Activated CD4-positive, alpha-beta T cell treated with anti-CD3 and anti-CD28 coated beads for 36 hours (primary cell): ENCODE measurements at regions of chrX and their contacts with region 1.

Region 1: GRCh38 chrX:136626237-136626636 is 21.7 kb upstream of the CD40LG start:
- DNase-seq: no peak
- ATAC-seq: peak; percentile 20
- H3K4me3 Mint-ChIP-seq: no peak overlapping the region
- H3K27ac Mint-ChIP-seq: peak overlapping the region; percentile 93
- H3K4me1 Mint-ChIP-seq: peaks cover 92% of the 10 kb centered on the region
- H3K27me3 Mint-ChIP-seq: no peaks in the 10 kb centered on the region

Region 2: DNA sequence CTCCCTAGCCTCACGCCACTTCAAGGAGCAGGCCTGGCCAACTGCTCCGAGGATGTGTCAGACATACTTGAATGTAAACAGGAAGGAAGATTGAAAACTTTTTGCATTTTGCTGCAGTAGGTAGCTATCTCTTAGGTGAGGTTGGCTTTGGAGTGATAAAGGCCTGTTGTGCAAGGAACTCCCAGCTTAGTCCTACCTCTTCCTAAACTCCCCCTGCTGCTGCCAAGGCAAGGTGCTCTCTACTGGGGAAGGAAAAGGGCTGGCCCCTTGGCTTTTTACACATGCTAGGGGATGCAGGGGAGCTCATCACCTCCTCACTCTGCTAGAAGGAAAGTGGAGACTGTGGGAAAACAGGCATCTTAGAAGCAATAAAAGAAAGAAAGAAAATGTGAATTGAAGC is 149.2 kb before region 1 on chrX:
- CTCF ChIA-PET with region 1: no interaction called
- POLR2A ChIA-PET with region 1: no interaction called
- intact Hi-C with region 1: no loop called
- DNase-seq: peak; percentile 17
- ATAC-seq: peak; percentile 47
- H3K4me3 Mint-ChIP-seq: no peak overlapping the region
- H3K27ac Mint-ChIP-seq: no peak overlapping the region
- H3K4me1 Mint-ChIP-seq: no peaks in the 10 kb centered on the region
- H3K27me3 Mint-ChIP-seq: no peaks in the 10 kb centered on the region

Region 3: GRCh38 chrX:136598631-136599030 is 27.6 kb before region 1 on chrX:
- CTCF ChIA-PET with region 1: no interaction called
- POLR2A ChIA-PET with region 1: no interaction called
- intact Hi-C with region 1: loop called (anchors 2 kb)
- DNase-seq: peak; percentile 58
- ATAC-seq: peak; percentile 86
- H3K4me3 Mint-ChIP-seq: peak overlapping the region; percentile 35
- H3K27ac Mint-ChIP-seq: peak overlapping the region; percentile 88
- H3K4me1 Mint-ChIP-seq: peaks cover 52% of the 10 kb centered on the region
- H3K27me3 Mint-ChIP-seq: no peaks in the 10 kb centered on the region

Region 4: GRCh38 chrX:136646602-136647239 is 20.5 kb after region 1 on chrX:
- CTCF ChIA-PET with region 1: interaction called, 7 read pairs
- POLR2A ChIA-PET with region 1: interaction called, 4 read pairs
- intact Hi-C with region 1: loop called (anchors 1 kb)
- DNase-seq: peak; percentile 84
- ATAC-seq: peak; percentile 60
- H3K4me3 Mint-ChIP-seq: peak overlapping the region; percentile 96
- H3K27ac Mint-ChIP-seq: peak overlapping the region; percentile 100
- H3K4me1 Mint-ChIP-seq: peaks cover 57% of the 10 kb centered on the region
- H3K27me3 Mint-ChIP-seq: no peaks in the 10 kb centered on the region

Region 5: GRCh38 chrX:136652822-136653723 is 26.8 kb after region 1 on chrX:
- CTCF ChIA-PET with region 1: interaction called, 6 read pairs
- POLR2A ChIA-PET with region 1: interaction called, 20 read pairs
- intact Hi-C with region 1: no loop called
- DNase-seq: peak; percentile 61
- ATAC-seq: peak; percentile 56
- H3K4me3 Mint-ChIP-seq: peak overlapping the region; percentile 96
- H3K27ac Mint-ChIP-seq: peak overlapping the region; percentile 100
- H3K4me1 Mint-ChIP-seq: peaks cover 43% of the 10 kb centered on the region
- H3K27me3 Mint-ChIP-seq: no peaks in the 10 kb centered on the region

Region 6: DNA sequence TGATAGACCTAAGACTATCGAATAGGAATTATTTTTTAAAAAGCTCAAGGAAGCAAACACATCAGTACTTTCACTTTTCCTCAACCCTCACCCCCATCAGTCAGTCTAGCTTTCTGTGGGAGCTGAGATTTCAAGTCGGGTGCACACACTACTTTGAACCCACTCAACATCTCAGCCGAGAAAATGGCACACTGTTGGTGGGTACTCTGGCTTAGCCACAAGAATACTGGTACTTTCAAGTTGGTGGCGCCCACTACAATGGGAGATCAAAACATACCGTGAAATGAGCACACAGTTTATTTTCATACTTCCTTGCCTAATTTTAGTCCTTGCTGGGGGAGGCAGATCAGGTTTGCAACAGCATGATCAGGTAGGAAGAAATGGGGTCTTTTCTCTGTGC is 31.9 kb after region 1 on chrX:
- CTCF ChIA-PET with region 1: interaction called, 6 read pairs
- POLR2A ChIA-PET with region 1: interaction called, 20 read pairs
- intact Hi-C with region 1: no loop called
- DNase-seq: peak; percentile 48
- ATAC-seq: peak; percentile 6
- H3K4me3 Mint-ChIP-seq: peak overlapping the region; percentile 96
- H3K27ac Mint-ChIP-seq: peak overlapping the region; percentile 100
- H3K4me1 Mint-ChIP-seq: peaks cover 85% of the 10 kb centered on the region
- H3K27me3 Mint-ChIP-seq: no peaks in the 10 kb centered on the region